ENCODE measurements at regions of chr3 and their contacts with region 1.

Region 1: GRCh38 chr3:146504498-146505197 is 35.3 kb upstream of the PLSCR2 start:
- DNase-seq: no peak
- ATAC-seq: no peak
- H3K4me3 ChIP-seq: no peak overlapping the region
- H3K4me1 ChIP-seq: peaks cover 26% of the 10 kb centered on the region
- CTCF ChIP-seq: no peak

Region 2: DNA sequence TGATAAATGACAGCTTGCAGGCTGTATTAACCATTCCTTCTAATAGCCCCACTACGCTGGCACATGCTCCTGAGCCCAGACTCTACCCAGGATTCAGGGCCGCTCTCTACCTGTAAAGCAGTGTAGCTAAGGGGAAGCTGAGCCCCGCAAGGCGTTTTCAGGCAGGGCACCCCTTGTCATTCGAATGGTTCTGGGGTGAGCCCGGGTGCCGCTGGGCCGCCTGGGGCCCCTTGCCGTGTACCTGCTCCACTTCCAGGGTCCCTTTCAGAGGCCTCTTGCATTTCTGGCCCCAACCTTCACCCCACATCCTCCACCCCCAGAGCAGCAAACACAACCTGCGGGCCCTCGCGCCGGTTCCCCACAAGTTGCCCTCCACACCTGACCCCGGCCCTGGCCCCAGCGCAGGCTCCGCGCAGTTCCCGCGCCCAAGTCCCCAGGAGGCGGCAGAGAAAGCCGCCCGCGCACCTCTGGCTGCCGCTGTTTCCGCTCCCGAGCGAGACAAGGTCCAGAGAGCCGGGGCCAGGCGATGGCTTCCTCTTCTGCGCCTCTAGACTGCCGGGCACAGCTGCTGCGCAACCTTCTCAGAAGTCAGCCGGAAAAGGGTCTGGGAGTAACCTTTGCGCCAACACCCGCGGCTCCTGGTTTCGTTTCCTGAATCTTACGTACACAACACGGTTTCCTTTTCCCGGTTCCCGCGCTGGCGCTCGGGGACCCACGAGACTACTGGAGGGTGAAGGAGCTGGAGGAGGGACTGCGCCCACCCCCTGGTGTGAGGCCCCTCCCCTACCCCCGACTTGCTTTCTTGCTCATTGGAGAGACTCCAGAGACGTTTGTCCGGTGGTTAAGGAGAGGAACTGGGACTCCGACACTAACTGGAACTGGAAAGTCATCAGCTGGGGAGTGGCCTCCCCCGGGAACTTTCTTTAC is 39.6 kb after region 1 on chr3 and contains the start of gene PLSCR1:
- intact Hi-C with region 1: loop called in 1 of 2 experiments (anchors 5 kb)
- DNase-seq: peak; percentile 94 to 97 (median 94)
- ATAC-seq: peak; percentile 92
- H3K4me3 ChIP-seq: peak within 1 kb of the TSS; percentile 35
- H3K4me1 ChIP-seq: peaks cover 20% of the 10 kb centered on the region
- CTCF ChIP-seq: no peak
- total RNA-seq, gene PLSCR1: 119 to 264 (median 180) TPM